Activated CD8-positive, alpha-beta T cell treated with anti-CD3 and anti-CD28 coated beads for 36 hours (primary cell): ENCODE measurements at regions of chr20 and their contacts with region 1.

Region 1: DNA sequence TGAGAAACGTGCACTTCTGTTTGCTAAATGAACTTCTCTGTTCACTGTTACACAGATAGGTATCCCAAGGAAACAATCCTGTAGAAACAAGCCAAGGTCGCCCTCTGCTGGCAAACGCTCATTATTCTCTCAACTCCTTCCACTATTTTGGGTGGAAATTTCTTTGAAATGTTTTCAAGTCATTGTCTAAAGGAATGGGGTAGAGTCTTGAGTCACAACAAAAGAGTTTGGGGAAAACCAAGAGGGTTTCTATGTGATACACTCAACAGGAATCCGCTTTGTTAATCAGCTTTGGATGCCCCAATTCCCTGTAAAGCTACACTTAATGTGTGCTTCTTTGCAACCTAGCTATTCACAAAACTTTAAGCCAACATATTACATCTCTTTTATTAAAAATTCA is 4.6 kb upstream of the RAE1 start:
- DNase-seq: peak; percentile 87
- ATAC-seq: peak; percentile 43
- H3K4me3 Mint-ChIP-seq: no peak overlapping the region
- H3K27ac Mint-ChIP-seq: no peak overlapping the region
- H3K4me1 Mint-ChIP-seq: peaks cover 4% of the 10 kb centered on the region
- H3K27me3 Mint-ChIP-seq: peaks cover 3% of the 10 kb centered on the region
- CTCF ChIP-seq: peak; percentile 83

Region 2: DNA sequence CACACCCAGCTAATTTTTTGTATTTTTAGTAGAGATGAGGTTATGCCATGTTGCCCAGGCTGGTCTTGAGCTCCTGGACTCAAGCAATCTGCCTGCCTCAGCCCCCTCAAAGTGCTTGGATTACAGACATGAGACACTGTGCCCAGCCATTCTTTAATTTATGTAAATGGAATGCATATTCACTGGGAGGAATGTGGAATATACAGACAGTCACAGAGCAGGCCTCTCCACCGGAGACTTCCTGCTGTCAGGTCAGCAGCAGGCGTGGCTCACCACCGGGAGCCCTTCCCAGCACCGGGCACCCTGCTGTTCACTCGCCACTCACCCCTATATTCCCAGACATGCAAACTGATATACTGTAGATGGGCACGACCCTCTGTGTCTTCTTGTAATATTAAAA is 634.3 kb before region 1 on chr20:
- CTCF ChIA-PET with region 1: no interaction called
- POLR2A ChIA-PET with region 1: no interaction called
- intact Hi-C with region 1: no loop called
- DNase-seq: no peak
- ATAC-seq: no peak
- H3K4me3 Mint-ChIP-seq: no peak overlapping the region
- H3K27ac Mint-ChIP-seq: no peak overlapping the region
- H3K4me1 Mint-ChIP-seq: no peaks in the 10 kb centered on the region
- H3K27me3 Mint-ChIP-seq: peaks cover 2% of the 10 kb centered on the region
- CTCF ChIP-seq: no peak

Region 3: GRCh38 chr20:57089691-57090150 is 256.8 kb before region 1 on chr20:
- CTCF ChIA-PET with region 1: interaction called, 42 read pairs
- POLR2A ChIA-PET with region 1: no interaction called
- intact Hi-C with region 1: loop called (anchors 2 kb)
- DNase-seq: peak; percentile 79
- ATAC-seq: peak; percentile 74
- H3K4me3 Mint-ChIP-seq: no peak overlapping the region
- H3K27ac Mint-ChIP-seq: no peak overlapping the region
- H3K4me1 Mint-ChIP-seq: peaks cover 10% of the 10 kb centered on the region
- H3K27me3 Mint-ChIP-seq: peaks cover 11% of the 10 kb centered on the region
- CTCF ChIP-seq: peak; percentile 90

Region 4: GRCh38 chr20:57094991-57095390 is 251.5 kb before region 1 on chr20:
- CTCF ChIA-PET with region 1: interaction called, 42 read pairs
- POLR2A ChIA-PET with region 1: no interaction called
- intact Hi-C with region 1: loop called (anchors 2 kb)
- DNase-seq: no peak
- ATAC-seq: no peak
- H3K4me3 Mint-ChIP-seq: no peak overlapping the region
- H3K27ac Mint-ChIP-seq: no peak overlapping the region
- H3K4me1 Mint-ChIP-seq: peaks cover 10% of the 10 kb centered on the region
- H3K27me3 Mint-ChIP-seq: peaks cover 11% of the 10 kb centered on the region
- CTCF ChIP-seq: no peak

Region 5: GRCh38 chr20:57329608-57330221 is 16.8 kb before region 1 on chr20 and contains the start of gene SPO11:
- CTCF ChIA-PET with region 1: interaction called, 31 read pairs
- POLR2A ChIA-PET with region 1: no interaction called
- intact Hi-C with region 1: no loop called
- DNase-seq: no peak
- ATAC-seq: no peak
- H3K4me3 Mint-ChIP-seq: no peak within 1 kb of the TSS
- H3K27ac Mint-ChIP-seq: no peak within 1 kb of the TSS
- H3K4me1 Mint-ChIP-seq: no peaks in the 10 kb centered on the region
- H3K27me3 Mint-ChIP-seq: peaks cover 9% of the 10 kb centered on the region
- CTCF ChIP-seq: no peak
- total RNA-seq, gene SPO11: not detected

Region 6: DNA sequence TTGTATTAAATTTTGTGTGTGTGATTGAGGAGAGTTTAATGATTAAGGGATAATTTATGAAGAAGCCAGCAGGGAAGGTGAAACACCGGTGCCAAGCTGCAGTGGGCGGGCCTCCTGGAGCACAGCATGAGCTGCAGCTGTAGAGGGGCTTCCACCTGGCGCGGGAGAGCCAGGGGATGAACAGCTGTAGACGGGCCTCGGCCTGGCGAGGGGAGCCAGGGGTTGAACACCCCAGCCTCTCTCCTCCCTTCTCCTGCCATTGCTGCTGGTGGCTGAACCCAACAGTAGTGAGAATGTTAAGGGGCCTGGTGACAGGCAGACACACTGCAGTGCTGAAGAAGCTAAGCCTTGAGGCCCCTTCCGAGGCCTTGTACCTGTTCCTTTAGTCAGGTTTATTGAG is 10.3 kb after region 1 on chr20:
- CTCF ChIA-PET with region 1: interaction called, 11 read pairs
- POLR2A ChIA-PET with region 1: no interaction called
- intact Hi-C with region 1: no loop called
- DNase-seq: no peak
- ATAC-seq: no peak
- H3K4me3 Mint-ChIP-seq: no peak overlapping the region
- H3K27ac Mint-ChIP-seq: no peak overlapping the region
- H3K4me1 Mint-ChIP-seq: peaks cover 22% of the 10 kb centered on the region
- H3K27me3 Mint-ChIP-seq: no peaks in the 10 kb centered on the region
- CTCF ChIP-seq: no peak